Activated CD4-positive, alpha-beta memory T cell treated with anti-CD3 and anti-CD28 coated beads for 36 hours (primary cell): ENCODE measurements at regions of chr22 and their contacts with region 1.

Region 1: DNA sequence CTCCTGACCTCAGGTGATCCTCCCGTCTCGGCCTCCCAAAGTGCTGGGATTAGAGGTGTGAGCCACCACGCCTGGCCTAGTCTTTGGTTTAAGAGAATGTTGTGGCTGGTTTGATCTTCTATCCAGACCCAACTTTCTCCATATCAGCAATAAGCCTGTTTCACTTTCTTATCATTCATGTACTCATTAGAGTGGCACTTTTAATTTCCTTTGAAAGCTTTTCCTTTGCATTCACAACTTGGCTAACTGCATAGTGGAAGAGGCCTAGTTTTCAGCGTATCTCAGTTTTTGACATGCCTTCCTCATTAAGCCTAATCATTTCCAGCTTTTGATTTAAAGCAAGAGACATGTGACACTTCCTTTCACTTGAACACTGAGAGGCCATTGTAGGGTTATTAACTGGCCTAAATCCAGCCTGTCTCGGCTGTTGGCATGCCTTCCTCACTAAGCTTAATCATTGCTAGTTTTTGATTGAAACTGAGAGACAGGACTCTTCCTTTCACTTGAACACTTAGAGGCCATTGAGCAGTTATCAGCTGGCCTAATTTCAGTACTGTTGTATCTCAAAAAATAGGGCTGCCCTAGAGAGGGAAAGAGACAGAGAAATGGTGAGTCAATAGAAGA is 13.1 kb upstream of the RPL3 start:
- DNase-seq: no peak
- H3K4me3 Mint-ChIP-seq: no peak overlapping the region
- H3K27ac Mint-ChIP-seq: peak overlapping the region; percentile 58
- H3K4me1 Mint-ChIP-seq: peaks cover 14% of the 10 kb centered on the region
- H3K27me3 Mint-ChIP-seq: no peaks in the 10 kb centered on the region

Region 2: DNA sequence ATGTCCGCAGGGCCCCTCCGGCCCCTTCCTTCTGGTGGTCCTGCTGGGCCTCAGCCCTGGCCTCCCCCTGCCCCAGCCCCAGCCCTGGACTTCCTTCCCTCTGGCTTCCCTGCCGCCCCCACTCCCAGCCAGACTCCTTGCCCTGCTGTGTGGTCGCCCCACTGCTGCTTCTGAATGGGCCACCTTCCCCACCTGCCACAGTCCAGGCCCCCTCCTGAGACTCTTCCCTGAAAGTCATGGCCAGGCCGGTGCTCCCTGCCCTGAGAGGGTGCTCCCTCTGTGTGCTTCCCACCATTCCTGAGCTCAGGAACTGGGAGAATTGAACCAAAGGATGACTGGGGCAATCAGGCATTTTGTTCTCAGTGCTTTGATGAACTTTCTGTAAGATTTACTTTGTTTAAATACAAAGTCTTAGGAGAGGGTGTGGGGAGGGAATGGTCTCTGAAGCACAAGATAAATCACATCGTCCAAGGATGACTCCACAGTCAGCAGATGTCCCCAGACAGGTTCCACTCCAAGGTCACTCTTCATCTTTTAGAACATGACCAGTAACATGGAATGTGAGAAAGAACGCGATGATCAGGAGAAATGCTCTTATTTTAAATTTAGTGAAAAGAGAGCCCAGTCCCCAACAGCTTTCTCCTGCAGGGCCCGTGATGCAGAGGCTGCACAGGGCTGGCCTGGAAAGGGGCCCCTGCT is 310.9 kb before region 1 on chr22:
- CTCF ChIA-PET with region 1: no interaction called
- POLR2A ChIA-PET with region 1: no interaction called
- intact Hi-C with region 1: no loop called
- DNase-seq: no peak
- H3K4me3 Mint-ChIP-seq: peak overlapping the region; percentile 90
- H3K27ac Mint-ChIP-seq: peak overlapping the region; percentile 97
- H3K4me1 Mint-ChIP-seq: peaks cover 59% of the 10 kb centered on the region
- H3K27me3 Mint-ChIP-seq: no peaks in the 10 kb centered on the region

Region 3: GRCh38 chr22:39343259-39344048 is 10.9 kb after region 1 on chr22:
- CTCF ChIA-PET with region 1: interaction called, 25 read pairs
- POLR2A ChIA-PET with region 1: no interaction called
- intact Hi-C with region 1: no loop called
- DNase-seq: peak; percentile 67
- H3K4me3 Mint-ChIP-seq: no peak overlapping the region
- H3K27ac Mint-ChIP-seq: no peak overlapping the region
- H3K4me1 Mint-ChIP-seq: peaks cover 4% of the 10 kb centered on the region
- H3K27me3 Mint-ChIP-seq: peaks cover 8% of the 10 kb centered on the region